Posterior cingulate gyrus (tissue), 11 donors: ENCODE measurements at regions of chr10 and their contacts with region 1.

Region 1: GRCh38 chr10:87861953-87862678 is 1.2 kb downstream of the KLLN start:
- DNase-seq: peak; percentile 84 to 98 (median 90)

Region 2: DNA sequence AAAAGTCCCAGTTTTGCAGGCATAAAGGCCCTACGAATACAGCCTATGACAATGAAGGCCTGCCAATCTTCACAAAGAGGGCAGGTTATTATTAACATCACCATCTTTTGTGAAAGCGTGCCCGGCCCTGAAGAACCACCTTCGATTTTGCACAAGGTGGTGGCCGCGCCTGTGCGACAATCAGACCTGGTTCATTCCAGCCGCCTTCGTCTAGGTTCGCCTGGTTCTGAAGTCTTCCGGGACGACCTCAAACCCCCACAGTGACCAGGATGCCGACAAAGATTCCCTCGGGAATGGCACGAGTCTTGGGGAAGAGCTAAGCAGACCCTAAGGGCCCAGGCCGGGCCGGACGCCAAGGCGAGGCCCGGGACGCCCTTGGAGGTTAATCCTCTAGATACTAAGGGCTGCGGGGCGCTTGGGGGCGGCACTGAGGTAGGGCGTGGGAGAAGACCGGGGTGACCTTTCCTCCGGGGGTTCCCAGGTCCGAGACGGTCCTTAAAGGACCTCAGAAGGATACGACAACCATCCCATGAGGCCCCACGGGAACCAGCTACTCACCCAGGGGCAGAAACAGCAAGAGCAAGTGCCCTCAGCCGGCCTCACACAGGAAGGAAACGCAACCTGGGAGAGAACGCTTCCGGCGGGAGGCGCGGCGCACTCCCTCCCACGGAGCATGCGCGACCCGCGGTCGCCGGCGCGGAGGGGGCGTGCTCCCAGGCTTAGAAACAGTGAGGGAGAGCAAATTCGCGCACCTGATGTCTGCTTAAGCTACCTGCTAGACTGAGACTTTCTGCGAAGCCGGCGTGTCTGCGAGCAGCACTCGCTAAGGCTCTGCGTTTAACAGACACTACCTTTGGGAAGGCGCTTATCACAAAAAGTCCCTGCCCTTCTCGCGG is 44.3 kb before region 1 on chr10 and contains the start of gene ATAD1:
- intact Hi-C with region 1: loop called (anchors 2 kb)
- DNase-seq: peak; percentile 78 to 97 (median 84)

Region 3: GRCh38 chr10:87942884-87943527 is 80.9 kb after region 1 on chr10:
- intact Hi-C with region 1: no loop called
- DNase-seq: no peak

Region 4: DNA sequence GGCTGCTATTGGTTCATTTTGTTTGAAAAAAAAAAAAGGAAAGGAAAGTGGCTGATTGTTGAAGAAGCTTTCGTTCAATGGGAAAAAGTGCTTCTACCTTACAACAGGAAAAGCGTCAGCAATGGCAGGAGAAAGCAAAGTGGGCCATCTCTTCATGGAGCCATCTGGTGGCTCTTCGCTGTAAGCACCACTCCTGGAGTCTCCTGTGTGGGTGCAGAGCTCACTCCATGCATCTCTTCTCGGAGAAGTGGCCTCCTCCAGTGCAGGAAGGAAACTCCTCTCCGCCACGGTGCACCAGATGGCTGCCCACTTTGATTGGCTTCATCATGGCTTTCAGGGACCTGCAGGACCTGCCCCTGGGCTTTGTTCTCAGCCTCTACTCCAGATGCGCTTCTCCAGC is 252.3 kb after region 1 on chr10:
- intact Hi-C with region 1: loop called (anchors 10 kb)
- DNase-seq: peak in 2 of 10 donors; percentile 79 to 86

Region 5: DNA sequence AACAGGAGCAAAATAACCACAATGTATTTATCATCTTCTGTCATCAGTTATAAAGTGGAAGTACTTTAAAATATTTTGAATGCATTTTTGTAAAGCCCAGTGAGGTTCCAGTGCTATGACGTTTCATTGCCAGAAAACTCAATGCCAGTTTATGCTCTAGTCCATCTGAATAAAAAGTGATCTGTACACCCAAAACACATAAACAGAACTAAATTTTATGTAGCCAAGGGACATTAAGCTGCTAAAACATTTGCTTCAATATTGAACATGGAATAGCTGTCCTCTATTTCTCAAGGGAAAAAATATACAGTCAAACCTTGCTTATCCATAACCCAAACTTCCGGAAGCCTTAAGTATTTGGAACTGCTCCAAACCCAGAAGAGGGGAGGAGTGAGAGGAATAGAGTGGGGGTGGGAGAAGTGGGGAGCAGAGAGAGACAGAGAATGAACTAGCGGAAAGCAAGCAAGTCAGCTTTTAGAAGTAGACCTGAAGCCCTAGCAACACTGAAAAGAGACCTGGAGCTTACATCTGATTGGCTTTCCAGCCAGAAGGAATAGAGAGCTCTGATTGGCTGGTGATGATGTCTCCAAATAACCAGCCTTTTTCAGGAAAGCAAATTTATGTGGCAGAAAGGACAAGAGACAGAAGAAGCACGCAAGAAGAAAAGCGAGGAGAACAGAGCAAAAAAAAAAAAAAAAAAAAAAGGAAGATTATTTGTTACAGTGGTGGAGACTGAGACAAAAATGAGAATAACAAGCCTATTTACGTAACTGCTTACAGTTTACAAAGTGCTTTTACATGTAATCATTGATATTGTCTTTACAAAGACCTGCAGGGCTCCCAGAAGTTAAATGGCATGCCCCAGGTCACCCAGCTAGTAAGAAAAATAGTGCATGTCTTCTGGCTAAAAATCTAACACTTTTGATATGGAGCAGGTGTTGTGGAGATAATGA is 525.0 kb after region 1 on chr10:
- intact Hi-C with region 1: loop called (anchors 5 kb)
- DNase-seq: peak in 4 of 10 donors; percentile 8 to 69 (median 26)

Region 6: GRCh38 chr10:88553116-88553752 is 691.1 kb after region 1 on chr10:
- intact Hi-C with region 1: loop called (anchors 5 kb)
- DNase-seq: peak in 5 of 10 donors; percentile 14 to 62 (median 40)